Caco-2 (cell line): ENCODE measurements at regions of chr16 and their contacts with region 1.

Region 1: GRCh38 chr16:68800257-68800875 is 43.0 kb upstream of the TANGO6 start:
- DNase-seq: peak; percentile 83 to 88
- H3K4me3 ChIP-seq: no peak overlapping the region
- H3K4me3 Mint-ChIP-seq: no peak overlapping the region
- H3K27ac Mint-ChIP-seq: peak overlapping the region; percentile 7
- H3K4me1 ChIP-seq: peaks cover 62% of the 10 kb centered on the region
- H3K4me1 Mint-ChIP-seq: peaks cover 18% of the 10 kb centered on the region
- H3K27me3 ChIP-seq: no peaks in the 10 kb centered on the region
- H3K27me3 Mint-ChIP-seq: no peaks in the 10 kb centered on the region
- CTCF ChIP-seq: peak; percentile 85 to 86

Region 2: GRCh38 chr16:68744369-68745280 is 55.7 kb before region 1 on chr16:
- CTCF ChIA-PET with region 1: interaction called, 3 read pairs
- POLR2A ChIA-PET with region 1: no interaction called
- intact Hi-C with region 1: loop called (anchors 1 kb)
- DNase-seq: peak; percentile 96
- H3K4me3 ChIP-seq: peak overlapping the region; percentile 13; the same call in 1 of the 2 replicates
- H3K4me3 Mint-ChIP-seq: peak overlapping the region; percentile 70
- H3K27ac Mint-ChIP-seq: peak overlapping the region; percentile 93
- H3K4me1 ChIP-seq: peaks cover 92% of the 10 kb centered on the region
- H3K4me1 Mint-ChIP-seq: peaks cover 74% of the 10 kb centered on the region
- H3K27me3 ChIP-seq: no peaks in the 10 kb centered on the region
- H3K27me3 Mint-ChIP-seq: no peaks in the 10 kb centered on the region
- CTCF ChIP-seq: no peak

Region 3: DNA sequence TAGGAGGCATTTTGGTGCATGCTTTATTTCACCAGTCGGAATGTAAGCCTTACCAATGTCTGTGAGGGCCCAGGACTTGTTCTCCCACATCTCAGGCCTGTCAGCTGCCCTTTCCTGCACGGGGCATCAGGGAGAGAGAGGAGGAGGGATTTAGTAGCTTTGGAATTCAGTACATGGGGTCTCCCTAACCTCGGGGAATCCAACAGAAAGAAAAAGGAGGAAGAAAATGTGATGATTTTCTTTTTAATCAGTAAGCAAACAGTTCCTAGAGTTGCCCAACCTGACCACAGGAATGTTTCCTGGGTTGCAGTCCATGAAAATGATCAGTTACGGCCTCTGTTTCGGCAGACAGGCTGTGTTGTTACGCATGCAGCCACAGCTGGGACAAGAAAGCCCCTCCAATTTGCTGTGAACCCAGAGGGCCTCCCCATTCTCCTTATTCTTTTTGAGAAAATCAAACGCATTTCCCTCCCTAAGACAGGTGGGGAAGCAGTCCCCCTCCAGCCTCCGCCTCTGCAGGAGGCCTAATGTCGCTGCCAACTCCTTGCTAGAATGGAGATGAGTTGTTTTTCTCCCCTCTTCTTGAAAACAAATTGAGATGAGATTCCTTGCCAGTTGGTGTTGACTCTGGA is 10.1 kb before region 1 on chr16:
- CTCF ChIA-PET with region 1: no interaction called
- POLR2A ChIA-PET with region 1: no interaction called
- intact Hi-C with region 1: loop called (anchors 1 kb)
- DNase-seq: peak; percentile 77 to 82
- H3K4me3 ChIP-seq: no peak overlapping the region
- H3K4me3 Mint-ChIP-seq: peak overlapping the region; percentile 9
- H3K27ac Mint-ChIP-seq: peak overlapping the region; percentile 76
- H3K4me1 ChIP-seq: peaks cover 61% of the 10 kb centered on the region
- H3K4me1 Mint-ChIP-seq: peaks cover 41% of the 10 kb centered on the region
- H3K27me3 ChIP-seq: no peaks in the 10 kb centered on the region
- H3K27me3 Mint-ChIP-seq: no peaks in the 10 kb centered on the region
- CTCF ChIP-seq: no peak

Region 4: GRCh38 chr16:68973700-68974099 is 173.3 kb after region 1 on chr16:
- CTCF ChIA-PET with region 1: no interaction called
- POLR2A ChIA-PET with region 1: no interaction called
- intact Hi-C with region 1: no loop called
- DNase-seq: no peak
- H3K4me3 ChIP-seq: no peak overlapping the region
- H3K4me3 Mint-ChIP-seq: no peak overlapping the region
- H3K27ac Mint-ChIP-seq: no peak overlapping the region
- H3K4me1 ChIP-seq: peaks cover 16% of the 10 kb centered on the region
- H3K4me1 Mint-ChIP-seq: peaks cover 21% of the 10 kb centered on the region
- H3K27me3 ChIP-seq: no peaks in the 10 kb centered on the region
- H3K27me3 Mint-ChIP-seq: no peaks in the 10 kb centered on the region
- CTCF ChIP-seq: no peak